ENCODE measurements at regions of chr4 and their contacts with region 1.

Region 1: GRCh38 chr4:113116414-113117357 is 67.2 kb downstream of the ANK2 start:
- DNase-seq: no peak
- ATAC-seq: peak in 7 of 8 donors; percentile 43 to 69 (median 67)
- H3K4me3 ChIP-seq: no peak overlapping the region
- H3K27ac ChIP-seq: no peak overlapping the region
- H3K4me1 ChIP-seq: peaks cover 0 to 18% (median 0%) of the 10 kb centered on the region in 9 donors
- H3K27me3 ChIP-seq: no peaks in the 10 kb centered on the region
- CTCF ChIP-seq: no peak

Region 2: DNA sequence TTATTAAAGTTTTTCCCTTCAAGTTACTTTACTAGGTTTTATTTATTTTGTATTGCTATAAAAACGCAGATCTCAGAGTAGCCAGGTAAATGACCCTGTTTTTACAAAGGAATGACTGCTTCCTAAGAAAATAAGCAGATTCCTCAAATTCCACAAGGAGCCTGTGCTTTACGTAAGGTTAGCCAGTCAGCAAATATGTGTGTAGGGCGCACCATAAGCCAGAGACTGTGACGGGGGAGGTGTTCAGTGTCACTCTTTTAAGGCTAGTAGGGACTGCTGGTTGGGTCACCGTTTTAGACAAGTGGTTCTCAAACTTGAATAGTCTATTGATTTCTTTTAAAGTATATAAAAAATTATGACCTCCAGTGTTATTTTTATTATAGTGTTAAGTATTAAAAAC is 52.7 kb after region 1 on chr4:
- intact Hi-C with region 1: loop called in 1 of 10 experiments (anchors 5 kb)
- DNase-seq: no peak
- ATAC-seq: no peak
- H3K4me3 ChIP-seq: no peak overlapping the region
- H3K27ac ChIP-seq: no peak overlapping the region
- H3K4me1 ChIP-seq: peaks cover 0 to 26% (median 13%) of the 10 kb centered on the region in 9 donors
- H3K27me3 ChIP-seq: no peaks in the 10 kb centered on the region
- CTCF ChIP-seq: no peak

Region 3: GRCh38 chr4:113179996-113180395 is 63.3 kb after region 1 on chr4:
- intact Hi-C with region 1: loop called in 1 of 10 experiments (anchors 5 kb)
- DNase-seq: no peak
- ATAC-seq: peak in 6 of 8 donors; percentile 34 to 49 (median 42)
- H3K4me3 ChIP-seq: no peak overlapping the region
- H3K27ac ChIP-seq: peak overlapping the region in 4 of 10 donors; percentile 29 to 49 (median 37)
- H3K4me1 ChIP-seq: peaks cover 7 to 63% (median 39%) of the 10 kb centered on the region in 9 donors
- H3K27me3 ChIP-seq: no peaks in the 10 kb centered on the region
- CTCF ChIP-seq: no peak

Region 4: DNA sequence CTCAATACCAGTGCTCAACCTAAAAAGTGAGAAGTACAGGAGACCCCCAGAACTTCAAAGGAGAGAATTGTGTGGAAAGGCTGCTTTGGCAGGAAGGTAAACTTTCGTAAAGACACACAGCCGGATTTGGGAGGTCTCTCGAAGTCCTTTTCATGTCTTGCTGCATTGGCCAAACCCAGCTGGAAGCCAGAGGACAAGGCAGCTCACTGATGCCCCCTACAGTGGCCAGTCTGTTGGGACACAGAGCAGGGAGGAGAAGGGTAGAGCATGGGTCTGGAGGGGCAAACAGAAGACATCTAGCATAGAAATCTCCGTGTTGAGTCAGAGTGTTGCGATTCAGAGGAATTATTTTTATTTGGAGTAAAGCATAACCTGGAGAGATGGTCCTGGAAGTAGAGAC is 131.6 kb after region 1 on chr4:
- intact Hi-C with region 1: loop called in 1 of 10 experiments (anchors 10 kb)
- DNase-seq: no peak
- ATAC-seq: peak in 1 of 8 donors; percentile 39
- H3K4me3 ChIP-seq: no peak overlapping the region
- H3K27ac ChIP-seq: no peak overlapping the region
- H3K4me1 ChIP-seq: no peaks in the 10 kb centered on the region
- H3K27me3 ChIP-seq: no peaks in the 10 kb centered on the region
- CTCF ChIP-seq: peak in 2 of 9 donors; percentile 6 to 26

Region 5: GRCh38 chr4:113445286-113445685 is 328.6 kb after region 1 on chr4:
- intact Hi-C with region 1: no loop called
- DNase-seq: peak; percentile 24 to 57
- ATAC-seq: peak; percentile 69 to 93 (median 79)
- H3K4me3 ChIP-seq: no peak overlapping the region
- H3K27ac ChIP-seq: peak overlapping the region; percentile 30 to 73 (median 67)
- H3K4me1 ChIP-seq: peaks cover 4 to 65% (median 42%) of the 10 kb centered on the region in 9 donors
- H3K27me3 ChIP-seq: no peaks in the 10 kb centered on the region
- CTCF ChIP-seq: no peak

Measured in heart right ventricle (tissue), 16 donors.